ENCODE measurements at regions of chr12 and their contacts with region 1.

Region 1: GRCh38 chr12:9273276-9273675 is 65.1 kb upstream of the PZP start:
- DNase-seq: no peak
- H3K4me3 ChIP-seq: no peak overlapping the region
- H3K4me3 Mint-ChIP-seq: no peak overlapping the region
- H3K27ac ChIP-seq: no peak overlapping the region
- H3K27ac Mint-ChIP-seq: no peak overlapping the region
- H3K4me1 ChIP-seq: no peaks in the 10 kb centered on the region
- H3K4me1 Mint-ChIP-seq: no peaks in the 10 kb centered on the region
- H3K27me3 ChIP-seq: no peaks in the 10 kb centered on the region
- H3K27me3 Mint-ChIP-seq: peaks cover 0 to 4% (median 1%) of the 10 kb centered on the region in 3 donors
- CTCF ChIP-seq: no peak

Region 2: GRCh38 chr12:9064201-9064814 is 209.0 kb before region 1 on chr12:
- intact Hi-C with region 1: loop called in 1 of 2 experiments (anchors 10 kb)
- DNase-seq: peak; percentile 54 to 68 (median 66)
- H3K4me3 ChIP-seq: peak overlapping the region; percentile 57 to 92 (median 84)
- H3K4me3 Mint-ChIP-seq: peak overlapping the region; percentile 85 to 91
- H3K27ac ChIP-seq: peak overlapping the region in 1 of 2 donors; percentile 79
- H3K27ac Mint-ChIP-seq: peak overlapping the region in 5 of 7 donors; percentile 10 to 82 (median 61)
- H3K4me1 ChIP-seq: peaks cover 15 to 18% of the 10 kb centered on the region in 2 donors
- H3K4me1 Mint-ChIP-seq: peaks cover 13% of the 10 kb centered on the region
- H3K27me3 ChIP-seq: peaks cover 0 to 5% of the 10 kb centered on the region in 2 donors
- H3K27me3 Mint-ChIP-seq: peaks cover 0 to 14% (median 3%) of the 10 kb centered on the region in 3 donors
- CTCF ChIP-seq: peak; percentile 73

Region 3: DNA sequence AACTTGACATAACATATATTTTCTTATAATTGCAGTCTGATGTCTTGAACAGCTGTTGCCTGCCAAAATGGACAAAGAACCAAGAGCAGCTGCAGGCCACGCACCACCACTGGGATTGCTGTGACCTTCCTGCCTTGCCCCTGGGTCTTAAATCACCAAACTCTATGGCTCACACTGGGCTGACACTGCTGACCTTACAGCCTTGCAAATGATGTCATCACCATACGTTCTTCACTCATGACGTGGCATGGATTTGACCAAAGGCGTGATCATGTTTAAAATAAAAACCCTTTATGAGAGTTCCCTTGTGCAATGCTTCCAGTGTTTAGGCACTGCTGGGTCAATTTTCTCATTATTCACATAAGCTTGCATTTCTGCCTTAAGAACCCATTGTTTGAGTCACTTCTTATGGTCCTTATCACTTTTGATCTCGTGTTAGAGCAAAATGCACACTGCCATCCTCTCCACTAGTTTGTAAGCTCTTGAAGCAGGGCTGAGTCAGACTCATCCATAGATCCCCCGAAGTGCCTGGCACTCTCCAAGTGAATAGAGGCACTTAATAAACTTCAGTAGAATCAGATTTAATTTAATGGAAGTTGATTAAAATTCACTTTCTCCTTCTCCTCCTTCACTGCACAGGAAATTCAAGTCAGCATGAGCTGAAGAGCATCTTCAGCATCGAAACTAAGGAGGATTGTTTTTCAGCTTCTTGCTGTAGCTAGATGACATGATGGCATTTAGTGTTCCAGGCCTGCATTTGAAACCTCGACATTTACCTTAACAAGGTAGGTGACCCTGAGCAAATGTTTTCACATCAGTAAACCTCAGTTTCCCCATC is 67.4 kb after region 1 on chr12:
- intact Hi-C with region 1: no loop called
- DNase-seq: no peak
- H3K4me3 ChIP-seq: no peak overlapping the region
- H3K4me3 Mint-ChIP-seq: no peak overlapping the region
- H3K27ac ChIP-seq: no peak overlapping the region
- H3K27ac Mint-ChIP-seq: no peak overlapping the region
- H3K4me1 ChIP-seq: no peaks in the 10 kb centered on the region
- H3K4me1 Mint-ChIP-seq: peaks cover 3% of the 10 kb centered on the region
- H3K27me3 ChIP-seq: no peaks in the 10 kb centered on the region
- H3K27me3 Mint-ChIP-seq: peaks cover 0 to 2% (median 2%) of the 10 kb centered on the region in 3 donors
- CTCF ChIP-seq: no peak

Measured in CD14-positive monocyte (primary cell).